ENCODE measurements at regions of chrX and their contacts with region 1.

Region 1: DNA sequence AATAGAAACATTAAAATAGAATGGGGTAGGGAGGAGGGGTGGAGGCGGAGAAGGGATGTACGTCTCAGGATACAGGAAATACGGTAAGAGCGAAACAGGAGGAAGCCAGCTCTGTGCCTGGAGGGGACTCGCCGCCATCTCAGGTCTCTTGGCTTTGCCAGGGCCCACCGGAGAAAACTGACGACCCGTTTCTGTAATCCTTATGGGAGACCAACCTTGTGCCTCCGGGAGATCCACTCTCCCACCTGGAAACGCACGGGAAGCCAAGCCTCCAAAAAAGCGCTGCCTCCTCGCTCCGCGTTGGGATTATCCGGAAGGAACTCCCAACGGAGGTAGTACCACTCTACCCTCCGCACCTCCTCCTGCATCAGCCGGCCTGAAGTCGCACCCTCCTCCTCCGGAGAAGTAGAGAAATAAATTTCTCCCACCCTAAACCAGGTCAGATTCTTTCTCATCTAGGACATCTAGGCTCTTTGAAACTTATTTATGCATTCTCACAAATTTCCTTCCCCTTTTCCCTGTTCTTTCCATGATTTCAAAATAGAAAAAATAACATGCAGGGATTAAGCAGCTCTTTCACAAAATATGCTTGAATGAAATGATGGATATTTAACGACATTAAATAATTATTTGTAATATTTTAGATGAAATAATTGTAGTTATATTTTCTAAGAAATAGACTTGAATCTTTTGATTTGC is at the start of gene NBDY:
- DNase-seq: peak; percentile 20
- ATAC-seq: peak; percentile 78
- H3K4me3 Mint-ChIP-seq: peak within 1 kb of the TSS; percentile 94
- H3K27ac Mint-ChIP-seq: peak within 1 kb of the TSS; percentile 92
- H3K4me1 Mint-ChIP-seq: peaks cover 25% of the 10 kb centered on the region
- H3K27me3 Mint-ChIP-seq: no peaks in the 10 kb centered on the region
- CTCF ChIP-seq: no peak
- total RNA-seq, gene NBDY: 30.0 and 41.0 TPM in 2 replicates

Region 2: GRCh38 chrX:54891573-54891972 is 1837.7 kb before region 1 on chrX:
- CTCF ChIA-PET with region 1: no interaction called
- POLR2A ChIA-PET with region 1: no interaction called
- intact Hi-C with region 1: loop called (anchors 5 kb)
- DNase-seq: no peak
- ATAC-seq: no peak
- H3K4me3 Mint-ChIP-seq: no peak overlapping the region
- H3K27ac Mint-ChIP-seq: no peak overlapping the region
- H3K4me1 Mint-ChIP-seq: no peaks in the 10 kb centered on the region
- H3K27me3 Mint-ChIP-seq: peaks cover 6% of the 10 kb centered on the region
- CTCF ChIP-seq: no peak

Region 3: GRCh38 chrX:56281789-56282188 is 447.5 kb before region 1 on chrX:
- CTCF ChIA-PET with region 1: interaction called, 18 read pairs
- POLR2A ChIA-PET with region 1: no interaction called
- intact Hi-C with region 1: loop called (anchors 2 kb)
- DNase-seq: no peak
- ATAC-seq: no peak
- H3K4me3 Mint-ChIP-seq: no peak overlapping the region
- H3K27ac Mint-ChIP-seq: no peak overlapping the region
- H3K4me1 Mint-ChIP-seq: no peaks in the 10 kb centered on the region
- H3K27me3 Mint-ChIP-seq: no peaks in the 10 kb centered on the region
- CTCF ChIP-seq: no peak

Region 4: DNA sequence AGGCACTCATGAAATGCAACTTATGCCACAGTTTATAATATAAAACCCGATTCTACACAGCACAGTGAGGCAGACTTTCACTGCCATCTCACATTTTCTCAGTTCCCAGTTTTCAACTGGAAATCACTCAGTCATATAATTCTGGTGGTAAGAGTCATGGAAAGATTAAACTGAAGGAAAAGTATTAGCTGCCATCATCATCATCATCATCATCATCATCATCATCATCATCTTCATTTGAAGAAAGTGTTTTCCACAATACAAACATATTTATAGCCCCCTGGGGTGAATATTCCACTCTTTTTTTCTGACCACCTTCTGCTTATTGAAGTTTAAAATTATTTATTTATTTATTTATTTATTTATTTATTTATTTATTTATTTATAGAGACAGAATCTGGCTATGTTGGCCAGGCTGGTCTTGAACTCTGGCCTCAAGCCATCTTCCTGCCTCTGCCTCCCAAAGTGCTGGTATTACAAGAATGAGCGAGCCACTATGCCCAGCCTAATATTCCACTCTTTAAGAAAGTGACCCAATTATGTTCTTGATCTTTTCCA is 171.8 kb before region 1 on chrX:
- CTCF ChIA-PET with region 1: no interaction called
- POLR2A ChIA-PET with region 1: no interaction called
- intact Hi-C with region 1: no loop called
- DNase-seq: no peak
- ATAC-seq: no peak
- H3K4me3 Mint-ChIP-seq: no peak overlapping the region
- H3K27ac Mint-ChIP-seq: no peak overlapping the region
- H3K4me1 Mint-ChIP-seq: no peaks in the 10 kb centered on the region
- H3K27me3 Mint-ChIP-seq: no peaks in the 10 kb centered on the region
- CTCF ChIP-seq: no peak